ENCODE measurements at regions of chr13 and their contacts with region 1.

Region 1: DNA sequence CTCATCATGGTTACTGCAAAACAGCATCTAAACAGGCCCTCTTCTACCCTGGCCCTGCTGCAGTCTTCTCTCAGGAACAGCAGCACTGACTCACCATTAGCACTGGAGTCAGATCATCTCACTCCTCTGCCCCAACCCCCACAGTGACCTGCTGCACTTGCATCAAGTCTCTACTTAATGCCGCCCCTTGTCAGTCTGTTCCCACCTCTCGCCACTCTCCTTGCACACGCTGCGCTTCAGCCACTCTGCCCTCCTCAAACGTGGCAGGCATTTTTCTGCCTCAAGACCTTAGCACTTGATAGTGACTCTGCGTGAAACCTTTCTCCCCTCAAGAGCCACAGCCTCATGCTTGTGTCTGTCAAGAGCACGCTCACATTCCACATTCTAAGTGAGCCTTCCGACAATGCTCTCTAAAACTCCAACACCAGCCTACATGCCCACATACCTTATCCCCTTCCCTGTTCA is 22.1 kb downstream of the MIPEP start:
- DNase-seq: no peak
- CTCF ChIP-seq: no peak

Region 2: DNA sequence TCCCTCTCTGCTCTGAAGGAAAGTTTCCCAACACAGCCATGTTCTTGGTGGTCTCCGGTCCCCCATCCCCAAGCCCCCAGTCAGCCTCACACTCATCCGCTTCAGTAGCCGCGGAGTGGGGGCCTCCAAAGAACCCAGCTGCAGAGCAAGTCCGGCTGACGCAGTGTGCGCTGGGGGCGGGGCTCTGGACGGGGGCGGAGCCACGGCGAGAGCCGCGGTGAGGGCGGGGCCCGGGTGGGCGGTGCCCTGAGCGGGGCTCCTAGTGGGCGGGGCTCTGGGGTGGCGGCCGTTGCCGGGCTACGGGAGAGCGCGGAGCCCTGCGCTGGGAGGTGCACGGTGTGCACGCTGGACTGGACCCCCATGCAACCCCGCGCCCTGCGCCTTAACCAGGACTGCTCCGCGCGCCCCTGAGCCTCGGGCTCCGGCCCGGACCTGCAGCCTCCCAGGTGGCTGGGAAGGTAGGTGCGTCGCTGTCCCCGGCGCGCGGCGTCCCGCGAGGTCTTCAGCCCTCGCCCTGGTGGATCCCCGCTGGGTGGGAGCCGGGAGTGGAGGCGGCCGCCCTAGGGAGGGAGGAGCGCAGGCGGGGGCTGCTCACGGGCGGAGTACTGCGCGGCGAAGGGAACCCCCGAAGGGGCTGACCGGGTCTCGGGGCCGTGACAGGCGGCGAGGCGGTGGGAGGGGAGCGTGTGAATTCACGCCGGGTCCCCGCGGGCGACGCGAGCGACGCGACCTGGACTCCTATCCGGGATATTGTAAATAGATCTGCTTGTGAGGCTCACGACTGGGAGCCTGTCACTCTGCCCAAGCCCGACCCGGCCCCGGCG is 287.8 kb before region 1 on chr13:
- in situ Hi-C with region 1: loop called (anchors 10 kb)
- DNase-seq: peak; percentile 95
- CTCF ChIP-seq: no peak